HepG2 (cell line): ENCODE measurements at regions of chr3 and their contacts with region 1.

Region 1: GRCh38 chr3:138923531-138923994 is 23.4 kb downstream of the FOXL2 start:
- DNase-seq: peak; percentile 75
- ATAC-seq: peak; percentile 84
- H3K4me3 ChIP-seq: peak overlapping the region in 1 of 3 experiments; percentile 29; a peak in 1 of 6 replicates
- H3K27ac ChIP-seq: no peak overlapping the region
- H3K4me1 ChIP-seq: peaks cover 13% of the 10 kb centered on the region
- H3K27me3 ChIP-seq: peaks cover 0 to 4% of the 10 kb centered on the region in 2 experiments; a peak in 2 of 5 replicates
- CTCF ChIP-seq: peak; percentile 94
- EP300 ChIP-seq: no peak
- POLR2A ChIP-seq: no peak
- RAD21 ChIP-seq: peak; percentile 78

Region 2: DNA sequence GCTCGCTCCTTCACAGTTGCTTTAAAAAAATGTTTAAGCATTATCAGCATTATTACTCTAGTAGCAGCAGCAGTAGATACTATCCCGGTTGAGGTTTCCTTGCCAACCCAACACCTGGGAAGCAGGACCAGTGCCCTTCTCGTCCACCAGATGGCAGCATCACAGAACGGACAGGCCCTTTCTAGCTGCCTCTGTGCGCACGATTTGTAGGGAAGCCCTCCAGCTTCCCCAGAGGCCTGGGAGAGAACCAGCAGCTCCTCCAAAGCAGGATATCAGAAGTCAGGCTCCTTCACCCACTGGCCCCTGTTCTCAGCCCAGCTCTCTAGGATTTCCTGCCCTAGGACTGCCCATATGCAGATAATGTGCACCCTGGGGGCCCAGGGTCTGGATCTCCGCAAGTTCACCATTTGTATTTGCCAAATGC is 506.0 kb before region 1 on chr3:
- CTCF ChIA-PET with region 1: interaction called, 12 read pairs
- POLR2A ChIA-PET with region 1: no interaction called
- in situ Hi-C with region 1: loop called (anchors 10 kb)
- intact Hi-C with region 1: no loop called
- DNase-seq: peak; percentile 82
- ATAC-seq: peak; percentile 98
- H3K4me3 ChIP-seq: no peak overlapping the region
- H3K27ac ChIP-seq: no peak overlapping the region
- H3K4me1 ChIP-seq: peaks cover 9% of the 10 kb centered on the region; the same call in 1 of the 2 replicates
- H3K27me3 ChIP-seq: no peaks in the 10 kb centered on the region
- CTCF ChIP-seq: peak; percentile 93
- EP300 ChIP-seq: no peak
- POLR2A ChIP-seq: no peak
- RAD21 ChIP-seq: peak; percentile 86

Region 3: DNA sequence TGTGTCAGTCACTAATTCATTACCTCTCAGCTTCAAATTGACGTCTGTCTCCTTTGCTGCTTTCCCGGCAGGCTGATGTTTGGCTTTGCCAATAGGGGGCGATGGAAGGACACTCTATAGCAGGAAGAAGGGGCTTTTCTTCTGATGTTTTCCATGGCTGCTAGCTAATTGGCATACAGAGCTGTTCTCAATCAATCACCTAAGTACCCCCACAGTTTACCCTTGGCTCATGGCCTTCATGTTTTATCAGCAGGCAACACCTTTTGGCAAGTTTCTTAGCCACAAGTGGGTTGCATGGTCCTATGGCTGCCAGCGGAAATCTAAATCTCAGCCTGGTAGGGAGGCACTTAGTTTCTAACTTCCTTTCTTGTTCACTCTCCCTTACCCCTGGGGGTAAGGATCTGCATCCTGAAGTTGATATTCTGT is 444.1 kb before region 1 on chr3:
- CTCF ChIA-PET with region 1: interaction called, 5 read pairs
- POLR2A ChIA-PET with region 1: no interaction called
- in situ Hi-C with region 1: loop called (anchors 5 kb)
- intact Hi-C with region 1: loop called (anchors 1 kb)
- DNase-seq: peak; percentile 50
- ATAC-seq: peak; percentile 78
- H3K4me3 ChIP-seq: no peak overlapping the region
- H3K27ac ChIP-seq: no peak overlapping the region
- H3K4me1 ChIP-seq: no peaks in the 10 kb centered on the region
- H3K27me3 ChIP-seq: no peaks in the 10 kb centered on the region
- CTCF ChIP-seq: peak; percentile 84
- EP300 ChIP-seq: no peak
- POLR2A ChIP-seq: no peak
- RAD21 ChIP-seq: peak; percentile 61

Region 4: GRCh38 chr3:138694287-138695007 is 229.1 kb before region 1 on chr3:
- CTCF ChIA-PET with region 1: interaction called, 13 read pairs
- POLR2A ChIA-PET with region 1: no interaction called
- in situ Hi-C with region 1: loop called (anchors 5 kb)
- intact Hi-C with region 1: no loop called
- DNase-seq: no peak
- ATAC-seq: no peak
- H3K4me3 ChIP-seq: no peak overlapping the region
- H3K27ac ChIP-seq: no peak overlapping the region
- H3K4me1 ChIP-seq: peaks cover 3% of the 10 kb centered on the region
- H3K27me3 ChIP-seq: no peaks in the 10 kb centered on the region
- CTCF ChIP-seq: no peak
- EP300 ChIP-seq: no peak
- POLR2A ChIP-seq: no peak
- RAD21 ChIP-seq: no peak